Activated T-helper 2 cell treated with anti-CD3 and anti-CD28 coated beads, Interferon-gamma antibody, Interleukin-2, Interleukin-4, amounts not matched to agents 10 μg/mL and 5 μg/mL and 100 μg/mL, durations not matched to agents 14 hours and 24 hours and 36 hours (primary cell): ENCODE measurements at regions of chr1 and their contacts with region 1.

Region 1: DNA sequence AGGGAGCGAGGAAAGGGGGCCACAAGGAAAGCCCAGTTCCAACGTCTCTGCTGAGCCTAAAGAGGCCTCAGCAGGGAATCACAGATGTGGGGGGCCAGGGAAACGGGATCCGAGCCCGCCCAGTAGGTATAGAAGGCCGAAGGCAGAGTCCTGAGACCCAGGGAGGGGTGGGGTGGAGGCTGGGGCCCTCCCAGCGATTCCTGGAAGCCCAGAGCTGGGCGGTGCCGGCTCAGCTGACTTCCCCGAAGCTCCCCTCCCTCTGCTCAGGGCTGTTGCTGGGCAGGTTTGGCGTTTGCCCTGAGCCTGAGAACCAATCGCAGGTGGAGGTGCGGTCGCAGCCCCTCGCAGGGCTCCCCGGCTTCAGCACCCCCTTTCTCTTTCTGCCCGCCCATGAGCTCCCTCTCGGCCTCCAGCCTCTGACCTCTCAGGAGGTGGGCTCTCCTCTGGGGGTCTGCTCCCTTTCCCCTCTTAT is 12.8 kb downstream of the ADAMTSL4 start:
- DNase-seq: peak; percentile 86
- H3K4me3 Mint-ChIP-seq: peak overlapping the region; percentile 97
- H3K27ac Mint-ChIP-seq: peak overlapping the region; percentile 100
- H3K4me1 Mint-ChIP-seq: peaks cover 44% of the 10 kb centered on the region
- H3K27me3 Mint-ChIP-seq: no peaks in the 10 kb centered on the region

Region 2: DNA sequence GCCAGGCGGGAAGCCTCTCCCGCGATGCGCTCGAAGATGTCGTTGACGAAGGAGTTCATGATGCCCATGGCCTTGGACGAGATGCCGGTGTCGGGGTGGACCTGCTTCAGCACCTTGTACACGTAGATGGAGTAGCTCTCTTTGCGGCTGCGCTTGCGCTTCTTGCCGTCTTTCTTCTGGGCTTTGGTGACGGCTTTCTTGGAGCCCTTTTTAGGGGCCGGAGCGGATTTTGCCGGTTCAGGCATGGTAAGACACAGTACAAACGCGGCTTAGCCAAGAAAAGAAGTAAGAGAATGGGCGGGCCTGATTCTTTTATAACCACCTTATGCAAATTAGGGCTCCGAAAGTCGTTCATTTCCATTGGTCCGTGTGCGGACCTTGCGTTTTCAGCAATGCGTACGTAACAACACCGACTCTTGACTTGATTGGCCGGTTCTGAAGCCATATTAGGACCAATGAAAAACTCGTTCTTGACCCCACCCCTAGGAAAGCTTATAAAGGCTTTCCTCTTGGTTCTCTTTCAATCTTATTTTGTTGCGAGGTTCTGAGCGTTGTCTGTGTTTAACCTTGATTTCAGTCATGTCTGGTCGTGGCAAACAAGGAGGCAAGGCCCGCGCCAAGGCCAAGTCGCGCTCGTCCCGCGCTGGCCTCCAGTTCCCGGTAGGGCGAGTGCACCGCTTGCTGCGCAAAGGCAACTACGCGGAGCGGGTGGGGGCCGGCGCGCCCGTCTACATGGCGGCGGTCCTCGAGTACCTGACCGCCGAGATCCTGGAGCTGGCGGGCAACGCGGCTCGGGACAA is 675.4 kb before region 1 on chr1:
- intact Hi-C with region 1: loop called (anchors 10 kb)
- DNase-seq: peak; percentile 90
- H3K4me3 Mint-ChIP-seq: no peak overlapping the region
- H3K27ac Mint-ChIP-seq: no peak overlapping the region
- H3K4me1 Mint-ChIP-seq: peaks cover 13% of the 10 kb centered on the region
- H3K27me3 Mint-ChIP-seq: no peaks in the 10 kb centered on the region

Region 3: GRCh38 chr1:150578965-150579798 is 17.2 kb after region 1 on chr1 and contains the start of gene MCL1:
- intact Hi-C with region 1: loop called (anchors 1 kb)
- DNase-seq: peak; percentile 89
- H3K4me3 Mint-ChIP-seq: peak within 1 kb of the TSS; percentile 98
- H3K27ac Mint-ChIP-seq: peak within 1 kb of the TSS; percentile 98
- H3K4me1 Mint-ChIP-seq: peaks cover 30% of the 10 kb centered on the region
- H3K27me3 Mint-ChIP-seq: no peaks in the 10 kb centered on the region
- total RNA-seq, gene MCL1: 217 and 221 TPM in 2 replicates

Region 4: DNA sequence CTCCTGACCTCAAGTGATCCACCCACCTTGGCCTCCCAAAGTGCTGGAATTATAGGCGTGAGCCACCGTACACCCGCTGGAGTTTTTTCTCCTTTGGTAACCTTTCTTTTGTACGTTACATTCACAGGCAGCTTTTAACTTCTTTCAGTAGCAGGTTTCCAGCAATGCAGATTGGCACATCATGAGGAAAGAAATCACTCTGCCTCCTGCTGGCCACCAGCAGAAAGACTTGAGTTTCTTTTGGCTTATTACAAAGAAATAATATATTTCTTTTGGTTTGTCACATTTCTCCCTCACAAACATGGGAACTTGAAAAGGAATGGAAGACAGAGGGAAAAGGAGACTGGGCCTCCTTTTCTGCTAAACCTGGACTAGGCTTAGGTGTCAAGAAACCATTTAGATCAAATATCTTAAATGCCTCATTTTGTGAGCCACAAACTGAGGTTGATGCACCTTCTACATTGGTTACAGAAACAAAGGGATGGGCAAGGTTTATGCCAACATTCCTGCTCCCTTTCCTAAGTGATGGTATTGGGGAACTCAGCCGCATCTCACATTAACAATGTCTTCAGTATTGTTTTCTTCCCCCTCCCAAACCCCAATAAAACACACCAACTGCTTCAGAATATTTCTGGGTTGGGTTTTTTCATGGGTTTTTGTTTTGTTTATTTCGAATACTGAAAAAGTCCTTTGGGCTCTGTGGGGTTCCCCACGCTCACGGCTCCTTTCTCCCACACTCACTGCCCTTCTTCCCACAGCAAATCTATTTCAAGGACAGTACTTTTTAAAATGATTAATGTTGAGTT is 59.7 kb after region 1 on chr1:
- intact Hi-C with region 1: loop called (anchors 1 kb)
- DNase-seq: peak; percentile 44
- H3K4me3 Mint-ChIP-seq: peak overlapping the region; percentile 20
- H3K27ac Mint-ChIP-seq: peak overlapping the region; percentile 74
- H3K4me1 Mint-ChIP-seq: peaks cover 61% of the 10 kb centered on the region
- H3K27me3 Mint-ChIP-seq: no peaks in the 10 kb centered on the region

Region 5: GRCh38 chr1:150696590-150697524 is 134.8 kb after region 1 on chr1 and contains the start of gene GOLPH3L:
- intact Hi-C with region 1: loop called (anchors 2 kb)
- DNase-seq: peak; percentile 91
- H3K4me3 Mint-ChIP-seq: peak within 1 kb of the TSS; percentile 96
- H3K27ac Mint-ChIP-seq: peak within 1 kb of the TSS; percentile 88
- H3K4me1 Mint-ChIP-seq: peaks cover 17% of the 10 kb centered on the region
- H3K27me3 Mint-ChIP-seq: peaks cover 9% of the 10 kb centered on the region
- total RNA-seq, gene GOLPH3L: 21.3 and 22.4 TPM in 2 replicates

Region 6: DNA sequence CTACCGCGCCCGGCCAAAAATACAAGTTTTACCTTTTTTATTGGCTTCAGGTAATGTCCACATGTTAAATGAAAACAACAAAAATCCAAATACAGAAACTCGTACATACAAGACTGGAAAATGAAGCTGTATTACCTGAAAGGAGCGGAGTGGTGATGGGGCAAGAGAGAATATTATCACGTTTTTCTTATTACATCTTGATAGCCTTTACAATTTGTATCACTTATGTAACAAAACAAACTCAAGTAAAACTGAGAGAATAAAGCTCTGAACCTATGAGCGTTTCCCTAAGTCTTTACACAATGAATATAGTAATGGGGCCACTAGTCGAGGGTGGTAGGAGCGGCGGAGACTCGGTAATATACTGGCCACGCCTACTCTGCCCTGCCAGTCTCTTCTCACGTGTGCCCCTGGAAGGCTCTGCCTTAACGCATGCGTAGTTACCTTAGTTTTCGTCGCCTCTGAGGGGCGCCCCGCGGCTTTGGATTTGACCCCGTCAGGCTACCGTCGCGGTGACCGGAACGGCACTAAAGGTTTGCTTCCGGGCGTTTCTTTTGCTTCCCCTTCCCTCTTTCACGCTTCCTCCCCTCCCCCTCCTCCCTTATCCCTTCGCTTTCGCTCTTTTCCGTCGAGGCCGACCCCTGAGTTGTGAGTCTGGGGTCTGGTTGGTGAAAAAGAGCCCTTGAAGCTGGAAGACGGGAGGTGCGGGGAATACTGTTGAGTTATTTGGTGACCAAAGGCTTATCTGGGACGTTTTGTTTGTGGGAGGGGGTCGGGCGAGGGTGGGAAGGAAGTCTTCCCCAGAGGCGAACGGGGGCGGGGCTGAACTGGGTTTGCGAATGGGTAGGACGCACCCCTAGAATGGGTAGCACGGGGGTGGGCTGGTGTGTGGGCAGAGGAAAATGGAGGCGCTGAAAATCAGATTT is 364.1 kb after region 1 on chr1 and contains the start of gene SETDB1:
- intact Hi-C with region 1: loop called (anchors 1 kb)
- DNase-seq: peak; percentile 93
- H3K4me3 Mint-ChIP-seq: peak within 1 kb of the TSS; percentile 97
- H3K27ac Mint-ChIP-seq: peak within 1 kb of the TSS; percentile 98
- H3K4me1 Mint-ChIP-seq: peaks cover 20% of the 10 kb centered on the region
- H3K27me3 Mint-ChIP-seq: no peaks in the 10 kb centered on the region
- total RNA-seq, gene SETDB1: 60.9 and 61.1 TPM in 2 replicates

Region 7: DNA sequence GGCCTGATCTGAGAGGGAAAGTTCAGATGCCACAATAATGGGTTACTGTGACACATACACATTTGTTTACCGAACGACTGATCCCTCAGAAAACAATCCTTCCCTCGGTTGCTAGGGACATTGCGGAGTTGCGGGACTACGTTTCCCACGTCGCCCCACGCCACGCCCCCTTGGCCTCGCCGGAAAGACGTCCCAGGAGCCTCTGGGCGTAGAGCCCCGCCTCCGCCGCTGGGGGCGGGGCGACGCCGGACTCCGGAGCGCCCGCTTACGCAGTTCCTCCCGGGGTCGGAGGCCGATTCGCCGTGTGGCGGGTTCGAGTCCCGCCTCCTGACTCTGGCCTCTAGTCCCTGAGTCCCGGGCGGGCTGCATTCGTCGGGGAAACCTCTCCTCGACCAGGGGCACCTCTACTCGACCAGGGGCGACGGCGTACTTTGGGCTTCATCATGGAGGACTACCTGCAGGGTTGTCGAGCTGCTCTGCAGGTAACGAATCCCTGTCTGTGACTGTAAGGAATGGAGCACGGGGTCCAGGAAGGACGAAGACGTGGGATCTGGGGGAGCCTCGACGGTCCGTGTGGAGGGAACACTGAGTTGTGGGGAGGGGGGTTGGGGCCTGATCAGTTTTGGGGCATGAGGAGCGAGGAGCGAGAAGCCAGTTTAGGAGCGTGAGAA is 446.3 kb after region 1 on chr1 and contains the start of gene PRUNE1:
- intact Hi-C with region 1: loop called (anchors 5 kb)
- DNase-seq: peak; percentile 92
- H3K4me3 Mint-ChIP-seq: peak within 1 kb of the TSS; percentile 98
- H3K27ac Mint-ChIP-seq: peak within 1 kb of the TSS; percentile 96
- H3K4me1 Mint-ChIP-seq: peaks cover 51% of the 10 kb centered on the region
- H3K27me3 Mint-ChIP-seq: no peaks in the 10 kb centered on the region
- total RNA-seq, gene PRUNE1: 15.1 and 15.5 TPM in 2 replicates